Activated naive CD4-positive, alpha-beta T cell treated with anti-CD3 and anti-CD28 coated beads for 36 hours (primary cell): ENCODE measurements at regions of chr5 and their contacts with region 1.

Region 1: DNA sequence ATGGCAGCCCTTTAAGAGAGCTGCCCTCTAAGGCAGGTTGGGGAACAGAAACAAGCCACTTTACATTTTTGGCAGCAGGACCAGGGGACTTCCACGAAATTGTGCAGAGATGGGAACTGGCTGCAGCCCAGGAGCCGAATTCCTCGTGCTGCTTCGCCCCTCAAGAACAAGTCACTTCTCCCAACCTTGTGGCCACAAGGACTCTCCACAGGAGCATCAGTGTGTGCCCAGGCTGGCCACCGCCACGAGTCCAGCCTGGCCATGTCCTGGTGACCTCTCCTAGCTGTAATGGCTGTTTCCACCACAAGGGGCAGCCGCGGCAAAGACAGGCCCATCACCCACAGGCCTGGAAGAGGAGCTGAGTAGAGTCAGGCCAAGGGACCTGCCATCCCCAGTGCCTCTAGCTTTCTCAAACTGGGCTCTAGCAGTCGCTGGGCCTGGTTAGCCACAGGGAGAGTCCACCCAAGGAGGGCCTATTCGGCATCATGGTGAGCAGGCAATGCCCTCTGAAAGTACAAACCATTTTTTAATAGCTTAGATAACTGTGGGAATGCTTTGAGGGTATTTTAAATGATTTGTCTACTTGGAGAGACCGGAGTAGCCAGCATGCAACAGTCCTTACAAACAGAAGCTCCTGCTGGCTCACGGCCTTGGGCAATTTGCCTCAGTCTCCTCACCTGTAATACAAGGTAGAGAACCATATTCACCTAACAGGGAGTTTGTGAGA is 129.0 kb downstream of the COL23A1 start:
- DNase-seq: peak; percentile 73
- H3K4me3 Mint-ChIP-seq: no peak overlapping the region
- H3K27ac Mint-ChIP-seq: no peak overlapping the region
- H3K4me1 Mint-ChIP-seq: no peaks in the 10 kb centered on the region
- H3K27me3 Mint-ChIP-seq: no peaks in the 10 kb centered on the region

Region 2: DNA sequence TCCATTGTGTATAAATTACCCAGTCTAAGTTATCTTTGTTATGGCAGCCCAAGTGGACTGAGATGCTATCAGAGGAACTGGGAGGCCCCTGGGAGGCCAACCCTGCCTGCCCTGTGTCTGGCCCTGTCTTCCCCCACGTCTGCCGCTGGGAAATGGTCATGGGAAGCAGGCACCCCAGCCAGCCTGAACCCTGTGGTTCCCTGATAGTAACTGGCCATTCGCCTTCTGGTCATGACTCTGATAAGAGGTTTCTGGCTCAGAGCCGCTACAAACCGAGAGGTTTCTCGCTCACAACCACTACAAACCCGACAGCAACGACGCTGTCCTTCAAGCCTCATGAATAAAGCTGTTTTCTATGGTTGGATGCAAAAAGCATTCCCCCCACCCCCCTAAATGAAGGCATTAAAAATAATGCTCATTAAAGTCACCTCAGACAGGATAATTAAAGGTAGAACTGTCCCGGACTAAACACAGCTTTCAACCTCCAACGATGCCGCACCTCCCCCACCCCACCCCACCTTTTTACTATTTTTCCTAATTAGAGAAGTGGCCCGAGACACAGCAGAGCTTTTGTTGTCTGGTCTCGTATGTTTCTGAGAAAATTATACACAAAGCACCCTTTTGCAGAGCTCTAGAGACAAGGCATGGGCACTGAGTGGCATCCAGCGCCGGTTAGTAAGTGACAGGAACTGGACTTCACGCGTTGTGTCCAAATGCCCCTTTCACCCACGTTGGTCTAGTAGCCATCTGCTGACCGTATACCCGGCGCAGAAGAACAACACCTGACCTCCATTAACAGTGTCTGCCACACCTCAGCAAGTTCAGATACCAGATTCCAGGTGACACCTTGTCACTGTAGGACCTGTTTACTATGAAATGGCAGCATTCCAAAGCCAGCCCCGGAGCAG is 11.8 kb before region 1 on chr5:
- CTCF ChIA-PET with region 1: interaction called, 10 read pairs
- intact Hi-C with region 1: no loop called
- DNase-seq: no peak
- H3K4me3 Mint-ChIP-seq: no peak overlapping the region
- H3K27ac Mint-ChIP-seq: no peak overlapping the region
- H3K4me1 Mint-ChIP-seq: no peaks in the 10 kb centered on the region
- H3K27me3 Mint-ChIP-seq: peaks cover 6% of the 10 kb centered on the region

Region 3: GRCh38 chr5:178551059-178551458 is 89.9 kb after region 1 on chr5:
- CTCF ChIA-PET with region 1: interaction called, 7 read pairs
- intact Hi-C with region 1: loop called (anchors 5 kb)
- DNase-seq: no peak
- H3K4me3 Mint-ChIP-seq: no peak overlapping the region
- H3K27ac Mint-ChIP-seq: no peak overlapping the region
- H3K4me1 Mint-ChIP-seq: no peaks in the 10 kb centered on the region
- H3K27me3 Mint-ChIP-seq: no peaks in the 10 kb centered on the region

Region 4: DNA sequence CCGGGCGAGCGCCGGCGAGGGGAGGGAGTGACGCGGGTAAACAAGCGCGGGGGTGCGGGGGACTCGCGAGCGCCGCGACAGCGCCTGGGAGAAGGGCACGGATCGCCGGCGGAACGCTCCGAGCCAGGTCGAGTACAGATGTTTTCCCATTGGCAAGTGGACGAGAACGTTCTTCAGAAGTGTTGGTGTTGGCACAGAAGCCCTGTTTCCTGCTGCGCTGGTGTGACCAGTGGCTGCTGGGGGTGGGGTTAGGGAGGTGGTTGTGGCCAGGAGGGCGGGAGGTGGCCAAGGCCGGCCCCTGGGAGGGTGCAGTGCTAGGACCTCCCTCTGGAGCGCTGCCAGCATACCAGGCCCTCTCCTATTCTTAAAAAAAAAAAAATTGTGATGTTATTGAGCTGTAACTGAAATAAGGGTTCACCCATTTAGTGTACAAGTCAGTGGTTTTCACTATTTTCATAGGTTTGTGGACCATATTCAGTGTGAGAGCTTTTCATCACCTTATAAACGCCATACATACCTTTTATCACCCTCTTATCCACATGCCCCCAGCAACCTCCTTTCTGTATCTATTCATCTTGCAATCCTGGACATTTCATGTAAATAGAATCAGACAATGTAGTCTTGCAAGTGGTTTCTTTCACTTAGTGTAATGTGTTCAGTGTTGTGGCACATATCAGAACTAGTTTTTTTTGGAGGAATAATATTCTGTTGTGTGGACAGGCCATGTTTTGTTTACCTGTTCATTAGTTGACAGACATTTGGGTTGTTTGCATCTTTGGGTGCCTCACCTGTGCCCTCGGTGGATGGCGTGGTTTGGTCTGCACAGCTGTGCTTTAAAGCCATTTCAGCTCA is 1360.6 kb after region 1 on chr5:
- CTCF ChIA-PET with region 1: no interaction called
- intact Hi-C with region 1: no loop called
- DNase-seq: peak; percentile 92
- H3K4me3 Mint-ChIP-seq: peak overlapping the region; percentile 88
- H3K27ac Mint-ChIP-seq: peak overlapping the region; percentile 92
- H3K4me1 Mint-ChIP-seq: peaks cover 49% of the 10 kb centered on the region
- H3K27me3 Mint-ChIP-seq: peaks cover 4% of the 10 kb centered on the region